Activated CD4-positive, alpha-beta memory T cell treated with anti-CD3 and anti-CD28 coated beads, Interleukin-2, amount 10 ng/mL, durations not matched to agents 7 days and 5 days (primary cell): ENCODE measurements at regions of chr7 and their contacts with region 1.

Region 1: DNA sequence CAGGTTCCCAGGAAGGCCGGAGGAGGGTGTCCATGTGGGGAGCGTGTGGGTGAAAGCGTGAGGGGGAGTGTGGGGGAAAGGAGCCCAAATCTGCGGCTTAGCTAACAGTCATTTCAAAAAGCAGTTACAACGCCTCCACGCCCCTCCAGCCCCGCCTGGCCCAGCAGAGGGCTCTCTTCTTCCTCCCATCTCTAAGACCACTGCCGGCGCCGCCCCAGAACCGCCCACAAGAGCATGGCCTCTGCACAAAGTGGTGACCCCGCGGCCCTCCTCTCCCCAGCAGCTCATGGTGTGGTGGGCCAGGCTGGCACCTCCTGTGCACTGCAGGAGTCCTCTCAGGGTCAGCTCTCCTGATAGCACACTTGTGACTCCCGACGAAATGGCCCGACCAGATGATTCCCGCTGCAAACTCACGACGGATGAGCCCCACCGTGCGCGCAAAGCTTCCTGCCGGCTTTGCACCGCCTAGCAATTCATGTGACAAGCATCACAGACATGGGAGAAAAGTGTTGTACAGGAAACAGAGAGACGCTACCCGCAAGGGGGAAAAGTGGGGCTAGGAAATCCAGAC is 12.4 kb upstream of the HUS1 start:
- DNase-seq: peak; percentile 91
- H3K4me3 Mint-ChIP-seq: peak overlapping the region; percentile 80
- H3K27ac Mint-ChIP-seq: peak overlapping the region; percentile 88
- H3K4me1 Mint-ChIP-seq: peaks cover 20% of the 10 kb centered on the region
- H3K27me3 Mint-ChIP-seq: no peaks in the 10 kb centered on the region

Region 2: DNA sequence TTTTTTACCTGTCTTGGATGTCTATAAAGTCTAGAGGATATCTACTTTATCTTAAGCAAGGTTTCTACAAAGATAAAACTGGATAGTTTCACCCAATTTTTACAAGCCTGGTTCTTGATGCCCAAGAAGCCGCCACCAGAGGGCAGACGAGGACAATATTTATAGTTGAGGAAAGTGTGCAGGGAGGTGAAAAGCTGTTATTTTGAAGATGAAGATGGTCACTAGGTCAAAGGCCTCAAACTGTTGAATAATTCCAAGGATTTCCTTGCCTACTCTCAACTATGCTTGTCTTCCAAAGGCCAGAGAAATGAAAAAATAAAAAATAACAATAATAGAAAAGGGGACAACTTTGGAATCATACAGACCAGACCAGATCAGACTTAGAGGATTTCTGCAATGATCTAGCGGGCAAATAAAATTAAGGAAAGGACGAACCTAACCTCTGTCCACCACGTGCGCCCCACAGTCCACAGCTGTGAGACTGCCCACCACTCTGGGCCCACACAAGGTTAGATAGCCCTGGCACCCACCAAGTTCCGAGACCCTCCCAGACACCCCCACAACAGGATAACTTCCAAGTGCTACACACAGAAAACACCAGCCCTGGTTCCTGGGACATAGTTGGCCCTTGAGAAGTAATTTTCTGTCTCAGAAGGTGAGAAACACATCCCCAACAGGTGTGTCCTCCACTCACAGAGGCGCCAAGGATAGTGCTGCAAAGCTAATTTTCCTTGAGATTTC is 46.4 kb before region 1 on chr7:
- CTCF ChIA-PET with region 1: interaction called, 21 read pairs
- POLR2A ChIA-PET with region 1: no interaction called
- DNase-seq: peak; percentile 80
- H3K4me3 Mint-ChIP-seq: no peak overlapping the region
- H3K27ac Mint-ChIP-seq: no peak overlapping the region
- H3K4me1 Mint-ChIP-seq: peaks cover 5% of the 10 kb centered on the region
- H3K27me3 Mint-ChIP-seq: peaks cover 2% of the 10 kb centered on the region

Region 3: DNA sequence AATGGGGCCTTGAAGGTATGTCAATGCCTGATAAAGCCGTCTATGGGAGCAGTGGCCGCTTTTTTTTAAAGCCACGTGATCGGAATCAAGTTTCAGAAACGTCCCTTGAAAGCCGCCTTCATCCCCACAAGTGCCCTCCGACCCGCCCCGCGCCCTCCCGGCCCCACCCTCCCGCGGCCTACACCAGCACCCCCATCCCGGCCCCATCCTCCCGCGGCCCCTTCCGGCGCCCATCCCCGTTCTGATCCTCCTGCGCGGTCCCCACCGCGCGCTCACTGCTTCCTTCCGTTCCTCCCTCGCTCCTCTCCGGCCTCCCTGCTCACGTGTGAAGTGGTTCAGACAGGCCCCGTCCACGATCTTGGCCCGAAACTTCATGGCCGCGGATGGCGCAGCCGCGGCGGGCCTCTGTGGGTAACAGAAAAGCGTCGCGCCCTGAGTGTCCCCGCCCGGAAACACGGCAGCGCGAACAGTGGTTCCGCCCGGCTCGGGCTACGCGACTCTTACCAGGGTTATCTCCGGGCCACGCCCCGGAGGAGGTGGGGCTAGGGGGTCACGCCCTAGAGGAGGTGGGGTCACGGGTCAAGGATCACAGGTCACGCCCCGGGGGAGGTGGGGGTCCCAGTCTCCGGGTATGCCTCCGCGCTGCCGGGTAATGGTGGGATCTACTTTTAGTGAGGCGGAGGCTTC is 12.5 kb before region 1 on chr7 and contains the start of gene HUS1:
- CTCF ChIA-PET with region 1: interaction called, 12 read pairs
- POLR2A ChIA-PET with region 1: interaction called, 14 read pairs
- DNase-seq: peak; percentile 96
- H3K4me3 Mint-ChIP-seq: peak within 1 kb of the TSS; percentile 87
- H3K27ac Mint-ChIP-seq: peak within 1 kb of the TSS; percentile 97
- H3K4me1 Mint-ChIP-seq: peaks cover 24% of the 10 kb centered on the region
- H3K27me3 Mint-ChIP-seq: peaks cover under 1% of the 10 kb centered on the region
- total RNA-seq, gene HUS1: 34.1 to 35.0 TPM

Region 4: GRCh38 chr7:48088559-48089045 is 96.8 kb after region 1 on chr7:
- CTCF ChIA-PET with region 1: interaction called, 21 read pairs
- POLR2A ChIA-PET with region 1: interaction called, 78 read pairs
- DNase-seq: no peak
- H3K4me3 Mint-ChIP-seq: peak overlapping the region; percentile 87
- H3K27ac Mint-ChIP-seq: peak overlapping the region; percentile 95
- H3K4me1 Mint-ChIP-seq: peaks cover 80% of the 10 kb centered on the region
- H3K27me3 Mint-ChIP-seq: no peaks in the 10 kb centered on the region

Region 5: DNA sequence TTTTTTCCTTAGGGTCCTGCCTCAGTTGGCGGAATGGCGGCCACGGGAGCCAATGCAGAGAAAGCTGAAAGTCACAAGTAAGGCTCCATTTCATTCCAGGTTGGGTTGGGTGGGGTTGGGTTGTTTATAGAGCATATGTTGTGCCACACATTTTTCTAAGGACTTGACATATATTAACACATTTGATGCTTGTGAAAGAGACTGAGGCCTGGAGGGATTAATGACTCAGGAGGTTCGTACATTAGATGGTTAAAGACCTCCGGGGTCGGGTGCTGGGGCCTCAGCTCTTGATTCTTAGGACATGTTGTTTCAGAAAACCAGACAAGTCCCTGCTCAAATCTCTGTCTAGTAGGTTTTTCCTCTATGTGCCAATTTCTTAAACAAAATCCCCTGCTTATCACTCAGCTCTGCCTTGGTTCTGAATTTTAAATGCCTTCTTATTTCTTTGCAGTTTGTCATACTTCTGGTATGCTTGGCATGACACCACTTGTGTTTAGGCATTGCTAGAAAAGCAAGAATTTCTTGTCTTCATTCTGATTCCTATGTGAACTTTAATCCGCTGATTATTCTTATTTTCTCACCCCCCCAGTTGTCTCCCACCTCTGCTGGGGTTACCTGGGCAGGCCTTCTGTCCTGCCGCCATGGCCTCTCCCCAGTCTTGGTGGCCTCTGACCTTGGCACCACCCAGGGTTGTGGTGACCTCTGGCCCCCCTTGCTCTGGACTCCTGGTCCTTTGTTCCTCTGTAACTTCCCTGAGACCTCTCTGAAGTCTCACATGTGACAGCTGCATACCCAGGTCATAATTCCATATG is 103.1 kb after region 1 on chr7:
- CTCF ChIA-PET with region 1: interaction called, 16 read pairs
- POLR2A ChIA-PET with region 1: interaction called, 78 read pairs
- DNase-seq: no peak
- H3K4me3 Mint-ChIP-seq: peak overlapping the region; percentile 8
- H3K27ac Mint-ChIP-seq: peak overlapping the region; percentile 96
- H3K4me1 Mint-ChIP-seq: peaks cover 95% of the 10 kb centered on the region
- H3K27me3 Mint-ChIP-seq: no peaks in the 10 kb centered on the region

Region 6: DNA sequence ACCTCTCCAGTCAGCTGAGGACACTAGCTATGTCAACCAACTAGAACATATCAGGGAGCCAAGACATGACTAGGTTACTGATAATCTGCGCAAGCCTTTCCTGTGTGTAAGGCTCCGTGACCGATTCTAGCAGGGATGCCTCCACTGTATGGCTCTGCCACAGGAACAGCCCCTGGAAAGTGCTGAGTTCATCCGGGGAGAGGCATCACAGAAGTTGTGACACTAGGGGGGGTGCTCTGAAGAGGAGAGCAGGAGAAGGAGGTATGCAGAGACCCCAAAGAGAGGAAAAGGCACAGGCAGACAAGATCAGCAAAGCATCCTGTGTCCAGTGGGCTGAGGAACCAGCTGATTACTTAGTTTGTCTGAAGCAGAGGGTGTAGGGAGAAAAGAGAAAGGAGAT is 110.7 kb after region 1 on chr7:
- CTCF ChIA-PET with region 1: interaction called, 77 read pairs
- POLR2A ChIA-PET with region 1: interaction called, 50 read pairs
- DNase-seq: no peak
- H3K4me3 Mint-ChIP-seq: no peak overlapping the region
- H3K27ac Mint-ChIP-seq: peak overlapping the region; percentile 58
- H3K4me1 Mint-ChIP-seq: peaks cover 47% of the 10 kb centered on the region
- H3K27me3 Mint-ChIP-seq: no peaks in the 10 kb centered on the region

Region 7: GRCh38 chr7:48109848-48110663 is 118.2 kb after region 1 on chr7:
- CTCF ChIA-PET with region 1: interaction called, 77 read pairs
- POLR2A ChIA-PET with region 1: interaction called, 50 read pairs
- DNase-seq: peak; percentile 90
- H3K4me3 Mint-ChIP-seq: no peak overlapping the region
- H3K27ac Mint-ChIP-seq: peak overlapping the region; percentile 52
- H3K4me1 Mint-ChIP-seq: peaks cover 14% of the 10 kb centered on the region
- H3K27me3 Mint-ChIP-seq: no peaks in the 10 kb centered on the region